Ovary (tissue), 10 donors: ENCODE measurements at regions of chr13 and their contacts with region 1.

Region 1: GRCh38 chr13:36395280-36395679 is 37.0 kb upstream of the CCNA1 start:
- DNase-seq: no peak
- H3K4me3 ChIP-seq: no peak overlapping the region
- H3K27ac ChIP-seq: no peak overlapping the region
- H3K4me1 ChIP-seq: no peaks in the 10 kb centered on the region
- H3K27me3 ChIP-seq: no peaks in the 10 kb centered on the region
- CTCF ChIP-seq: peak in 2 of 3 donors; percentile 27 to 46
- EP300 ChIP-seq: no peak
- POLR2A ChIP-seq: no peak

Region 2: DNA sequence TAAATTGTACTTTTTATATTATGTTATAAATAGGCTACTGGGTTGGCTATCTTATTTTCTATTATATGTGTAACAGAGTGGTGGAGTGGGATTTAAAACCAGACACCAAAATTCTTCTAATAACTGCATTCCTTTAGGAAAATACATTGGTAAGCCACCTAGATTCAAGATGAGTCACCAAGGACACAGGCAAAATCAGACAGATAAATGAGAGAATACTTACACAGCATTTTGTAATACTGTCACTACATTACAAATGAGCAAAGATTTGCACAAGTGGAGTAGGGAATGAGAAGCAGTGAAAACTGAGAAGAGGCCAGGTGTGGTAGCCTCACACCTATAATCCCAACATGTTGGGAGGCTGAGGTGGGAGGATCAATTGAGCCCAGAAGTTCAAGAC is 42.9 kb before region 1 on chr13:
- intact Hi-C with region 1: loop called in 1 of 4 experiments (anchors 5 kb)
- DNase-seq: no peak
- H3K4me3 ChIP-seq: no peak overlapping the region
- H3K27ac ChIP-seq: no peak overlapping the region
- H3K4me1 ChIP-seq: peaks cover 12% of the 10 kb centered on the region
- H3K27me3 ChIP-seq: no peaks in the 10 kb centered on the region
- CTCF ChIP-seq: no peak
- EP300 ChIP-seq: no peak
- POLR2A ChIP-seq: no peak